Mammary epithelial cell (primary cell): ENCODE measurements at regions of chr5 and their contacts with region 1.

Region 1: GRCh38 chr5:161155461-161155860 is 303.4 kb upstream of the ATP10B start:
- DNase-seq: no peak
- H3K4me3 ChIP-seq: no peak overlapping the region
- H3K27ac ChIP-seq: no peak overlapping the region
- H3K4me1 ChIP-seq: no peaks in the 10 kb centered on the region
- H3K27me3 ChIP-seq: no peaks in the 10 kb centered on the region
- CTCF ChIP-seq: no peak

Region 2: DNA sequence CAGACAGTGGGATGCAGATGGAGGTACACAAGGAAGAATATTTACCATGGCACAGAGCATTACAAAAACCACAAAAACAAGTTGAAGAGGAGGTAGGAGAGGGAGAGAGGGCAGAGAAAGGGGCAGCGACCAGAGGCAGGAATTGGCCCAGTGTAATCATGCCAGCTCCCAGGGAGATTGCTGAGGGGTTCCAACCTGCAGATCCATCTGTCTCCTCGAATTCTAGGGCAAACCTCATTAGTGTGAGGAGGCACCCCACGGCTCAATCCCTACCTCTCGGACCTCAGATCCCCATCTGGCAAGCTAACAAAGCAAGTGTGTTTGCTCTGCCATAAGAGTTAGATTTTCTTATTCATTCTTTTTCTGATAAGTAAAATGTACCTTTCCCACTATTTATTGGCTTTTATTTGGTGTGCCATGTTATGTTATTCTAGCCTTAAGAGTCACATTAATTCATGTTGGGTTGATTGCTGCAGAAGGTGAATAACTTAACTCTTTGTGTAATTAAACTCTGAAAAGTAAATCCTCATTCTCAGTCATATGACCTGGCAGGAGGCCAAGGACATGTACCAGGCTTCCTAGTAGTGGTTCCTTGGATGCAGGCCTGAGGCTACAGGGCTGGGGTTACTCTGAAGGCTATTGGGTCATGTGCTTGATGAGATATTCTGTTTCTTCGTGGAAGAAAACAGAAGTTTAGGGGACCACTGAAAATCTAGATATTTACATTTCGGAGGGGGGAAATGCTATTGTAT is 11.7 kb after region 1 on chr5:
- CTCF ChIA-PET with region 1: no interaction called
- dilution Hi-C with region 1: no loop called
- in situ Hi-C with region 1: no loop called
- intact Hi-C with region 1: loop called (anchors 1 kb)
- DNase-seq: no peak
- H3K4me3 ChIP-seq: no peak overlapping the region
- H3K27ac ChIP-seq: no peak overlapping the region
- H3K4me1 ChIP-seq: no peaks in the 10 kb centered on the region
- H3K27me3 ChIP-seq: no peaks in the 10 kb centered on the region
- CTCF ChIP-seq: no peak